ENCODE measurements at regions of chr11 and their contacts with region 1.

Region 1: GRCh38 chr11:66480117-66480938 is at the start of gene DPP3:
- DNase-seq: peak; percentile 93 to 99
- H3K4me3 ChIP-seq: peak within 1 kb of the TSS; percentile 61
- H3K27ac ChIP-seq: peak within 1 kb of the TSS; percentile 59
- H3K4me1 ChIP-seq: peaks cover 7% of the 10 kb centered on the region
- H3K27me3 ChIP-seq: no peaks in the 10 kb centered on the region
- CTCF ChIP-seq: no peak
- total RNA-seq, gene DPP3: 76.2 and 80.0 TPM in 2 replicates

Region 2: DNA sequence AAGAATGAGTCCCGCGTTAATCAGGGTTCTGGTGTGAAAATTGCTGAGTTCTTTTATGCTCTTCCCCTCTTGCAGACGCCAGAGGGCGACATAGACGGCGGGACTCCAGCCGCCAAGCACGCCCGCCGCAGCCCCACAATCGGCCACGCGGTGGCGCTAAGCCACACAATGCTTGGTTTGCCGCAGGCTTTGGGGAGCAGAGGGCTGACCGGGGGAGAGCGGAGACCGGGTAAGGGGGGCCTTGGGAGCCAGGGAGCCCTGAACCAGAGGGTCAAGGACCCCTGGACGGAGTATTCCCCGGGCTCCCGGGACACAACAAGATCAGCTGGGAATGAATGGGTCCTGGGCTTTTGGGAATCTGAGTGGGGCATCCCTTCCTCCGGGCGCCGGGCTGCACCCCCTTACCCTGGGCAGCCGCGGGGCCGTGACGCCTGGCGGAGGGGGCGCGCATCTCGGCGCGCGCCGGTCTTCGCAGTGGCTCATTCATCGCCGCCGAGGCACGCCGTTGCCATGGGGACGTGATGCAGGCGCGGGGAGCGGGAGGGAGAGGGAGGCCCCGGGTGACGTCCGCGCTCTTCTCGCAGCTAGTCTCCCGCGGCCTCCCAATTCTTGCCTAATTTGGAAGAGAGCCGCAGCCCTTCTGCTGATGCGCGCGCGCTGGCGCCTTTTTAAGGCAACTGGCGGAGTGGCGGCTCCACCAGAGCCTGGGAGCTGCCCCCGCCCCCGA is 71.7 kb before region 1 on chr11:
- CTCF ChIA-PET with region 1: interaction called, 7 read pairs
- POLR2A ChIA-PET with region 1: interaction called, 4 read pairs
- intact Hi-C with region 1: loop called (anchors 1 kb)
- DNase-seq: peak; percentile 58 to 87
- H3K4me3 ChIP-seq: no peak overlapping the region
- H3K27ac ChIP-seq: no peak overlapping the region
- H3K4me1 ChIP-seq: no peaks in the 10 kb centered on the region
- H3K27me3 ChIP-seq: peaks cover 88% of the 10 kb centered on the region
- CTCF ChIP-seq: peak; percentile 100

Region 3: DNA sequence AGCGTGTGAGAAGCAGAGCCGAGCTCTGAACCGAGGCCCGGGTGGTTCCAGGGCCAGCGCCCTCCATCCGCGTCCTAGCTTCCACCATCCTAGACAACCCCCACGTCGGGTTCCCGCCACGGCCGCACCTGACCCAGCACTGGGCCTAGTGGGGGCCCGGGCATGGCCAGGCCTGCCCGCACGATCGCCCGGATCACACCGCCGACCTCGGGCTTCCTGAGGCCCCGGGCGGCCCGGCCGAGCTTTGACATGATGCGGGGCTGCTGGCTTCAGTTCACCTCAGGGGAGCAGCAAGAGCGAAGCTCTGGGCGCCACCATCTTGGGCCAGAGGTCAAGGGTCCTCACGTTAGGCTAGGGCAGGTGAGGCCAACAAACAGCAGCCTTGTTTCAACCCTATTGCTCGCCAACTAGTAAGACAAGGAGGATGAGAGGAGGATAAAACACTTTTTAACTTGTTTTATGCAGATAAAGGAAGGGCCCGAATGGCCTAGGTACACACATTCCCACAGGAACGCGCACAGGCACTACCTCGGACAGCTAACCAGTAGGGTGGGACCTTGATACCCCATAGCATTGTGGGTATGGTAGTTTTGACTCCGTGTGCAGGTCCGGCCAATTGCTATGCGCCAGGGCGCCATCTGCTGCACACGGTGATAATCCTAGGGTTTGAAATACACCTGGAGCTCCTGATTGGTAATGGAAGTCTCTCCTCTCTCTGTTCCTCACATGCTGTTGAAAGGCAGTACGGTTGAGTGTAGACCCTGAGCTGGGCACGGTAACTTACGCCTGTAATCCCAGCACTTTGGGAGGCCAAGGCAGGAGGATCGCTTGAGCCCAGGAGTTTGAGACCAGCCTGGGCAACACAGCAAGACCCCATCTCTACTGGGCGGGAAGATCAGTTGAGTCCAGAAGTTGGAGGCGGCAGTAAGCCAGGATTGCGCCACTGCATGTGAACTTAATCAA is 41.5 kb before region 1 on chr11 and contains the start of gene MRPL11:
- CTCF ChIA-PET with region 1: no interaction called
- POLR2A ChIA-PET with region 1: no interaction called
- intact Hi-C with region 1: loop called (anchors 1 kb)
- DNase-seq: peak; percentile 91
- H3K4me3 ChIP-seq: peak within 1 kb of the TSS; percentile 71
- H3K27ac ChIP-seq: peak within 1 kb of the TSS; percentile 58
- H3K4me1 ChIP-seq: peaks cover 12% of the 10 kb centered on the region
- H3K27me3 ChIP-seq: no peaks in the 10 kb centered on the region
- CTCF ChIP-seq: peak; percentile 78
- total RNA-seq, gene MRPL11: 138 and 140 TPM in 2 replicates

Region 4: DNA sequence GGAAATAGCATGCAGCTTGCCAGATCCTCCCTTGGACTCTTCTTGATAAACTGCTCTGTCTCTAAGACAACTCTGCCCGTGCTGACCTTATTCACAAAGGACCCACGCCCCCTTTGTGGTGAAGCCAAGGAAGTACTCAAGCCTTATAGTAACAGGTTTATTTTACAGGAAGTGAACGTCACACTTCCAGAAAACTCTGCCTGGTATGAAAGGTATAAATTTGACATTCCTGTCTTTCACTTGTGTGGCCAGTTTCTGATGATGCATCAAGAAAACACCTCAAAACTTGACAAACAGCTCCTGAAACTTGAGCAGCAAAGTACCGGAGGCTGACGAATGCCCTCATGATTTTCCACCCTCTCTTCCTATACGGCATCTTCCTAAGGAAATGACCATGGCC is 26.1 kb before region 1 on chr11:
- CTCF ChIA-PET with region 1: no interaction called
- POLR2A ChIA-PET with region 1: interaction called, 5 read pairs
- intact Hi-C with region 1: loop called (anchors 1 kb)
- DNase-seq: peak; percentile 58 to 98
- H3K4me3 ChIP-seq: no peak overlapping the region
- H3K27ac ChIP-seq: peak overlapping the region; percentile 65
- H3K4me1 ChIP-seq: peaks cover 23% of the 10 kb centered on the region
- H3K27me3 ChIP-seq: no peaks in the 10 kb centered on the region
- CTCF ChIP-seq: no peak

Region 5: DNA sequence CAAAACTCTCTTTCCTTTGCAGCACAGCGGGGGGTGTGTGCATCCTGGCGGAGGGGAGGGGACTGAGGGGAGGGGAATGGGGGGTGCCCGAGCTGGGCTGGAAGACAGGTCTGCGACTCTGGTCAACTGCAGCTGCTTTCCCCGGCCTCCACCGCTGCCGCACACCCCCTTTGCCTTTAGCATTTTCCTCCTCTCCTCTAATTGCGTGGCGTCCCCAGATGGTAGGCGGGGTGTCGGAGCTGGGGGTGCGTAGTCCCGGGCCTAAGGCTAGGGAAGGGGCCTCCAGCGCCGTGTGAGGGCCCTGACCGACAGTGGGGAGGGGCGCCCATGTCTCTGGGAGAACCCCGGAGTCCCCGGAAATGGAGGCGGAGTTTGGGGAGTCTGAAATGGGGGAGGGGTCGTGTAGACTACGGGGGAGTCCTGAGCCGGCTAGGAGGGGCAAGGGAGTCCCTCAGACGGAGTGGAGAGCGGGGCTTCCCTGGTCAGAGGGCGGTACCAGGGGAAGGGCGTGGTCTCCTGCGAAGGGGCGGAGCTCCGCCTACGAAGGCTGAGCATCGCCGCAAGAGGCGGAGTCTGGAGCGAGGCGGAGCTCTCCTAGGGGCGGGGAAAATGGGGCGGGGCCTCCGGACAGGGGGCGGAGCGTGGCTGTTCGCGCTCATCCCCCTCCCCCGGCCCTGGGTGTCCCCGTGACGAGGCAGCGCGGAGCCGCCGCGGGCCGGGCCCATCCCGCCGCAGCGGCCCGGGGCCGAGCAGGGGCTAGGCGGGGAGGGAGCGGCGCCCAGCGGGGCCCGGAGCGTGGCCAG is 13.9 kb before region 1 on chr11 and contains the start of gene PELI3:
- CTCF ChIA-PET with region 1: no interaction called
- POLR2A ChIA-PET with region 1: interaction called, 17 read pairs
- intact Hi-C with region 1: no loop called
- DNase-seq: peak; percentile 77 to 95
- H3K4me3 ChIP-seq: peak within 1 kb of the TSS; percentile 90
- H3K27ac ChIP-seq: no peak within 1 kb of the TSS
- H3K4me1 ChIP-seq: peaks cover 10% of the 10 kb centered on the region
- H3K27me3 ChIP-seq: no peaks in the 10 kb centered on the region
- CTCF ChIP-seq: no peak
- total RNA-seq, gene PELI3: 14.0 and 18.0 TPM in 2 replicates

Region 6: DNA sequence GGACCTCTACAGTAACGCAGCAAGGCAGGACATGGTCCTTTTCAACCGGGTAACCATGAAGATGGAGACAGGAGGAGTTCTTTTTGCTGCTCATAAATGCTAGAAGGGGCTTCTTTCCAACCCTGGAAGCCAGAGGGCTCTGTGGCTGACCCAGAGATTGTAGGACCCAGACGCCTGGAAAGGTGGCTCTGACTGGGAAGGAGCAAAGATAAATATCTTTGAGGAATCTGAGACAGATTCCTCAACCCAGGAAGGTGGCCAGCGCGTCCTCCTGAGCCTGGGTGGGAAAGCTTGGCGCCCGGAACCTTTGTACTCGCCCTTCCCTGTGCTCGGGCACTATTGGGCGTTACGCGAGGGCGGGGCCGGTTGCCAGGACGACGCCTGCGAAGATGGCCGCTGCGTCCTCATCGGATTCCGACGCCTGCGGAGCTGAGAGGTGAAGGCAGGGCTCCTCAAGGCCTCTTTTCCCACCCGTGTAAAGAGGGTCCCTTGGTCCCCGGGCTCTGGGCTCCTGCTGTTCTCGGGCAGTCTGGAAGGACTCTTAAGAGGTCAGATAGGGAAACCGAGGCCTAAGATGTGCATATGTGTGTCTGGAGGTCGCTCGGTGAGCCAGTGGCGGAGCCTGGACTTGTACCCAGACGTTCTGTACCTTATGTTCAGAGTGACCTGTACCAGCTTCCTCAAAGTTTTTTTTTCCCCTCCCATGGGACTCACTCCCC is 30.1 kb after region 1 on chr11 and contains the start of gene BBS1:
- CTCF ChIA-PET with region 1: no interaction called
- POLR2A ChIA-PET with region 1: interaction called, 3 read pairs
- intact Hi-C with region 1: loop called (anchors 1 kb)
- DNase-seq: peak; percentile 71 to 79
- H3K4me3 ChIP-seq: peak within 1 kb of the TSS; percentile 93
- H3K27ac ChIP-seq: no peak within 1 kb of the TSS
- H3K4me1 ChIP-seq: peaks cover 11% of the 10 kb centered on the region
- H3K27me3 ChIP-seq: no peaks in the 10 kb centered on the region
- CTCF ChIP-seq: no peak
- total RNA-seq, gene BBS1: 56.1 and 63.4 TPM in 2 replicates

Region 7: DNA sequence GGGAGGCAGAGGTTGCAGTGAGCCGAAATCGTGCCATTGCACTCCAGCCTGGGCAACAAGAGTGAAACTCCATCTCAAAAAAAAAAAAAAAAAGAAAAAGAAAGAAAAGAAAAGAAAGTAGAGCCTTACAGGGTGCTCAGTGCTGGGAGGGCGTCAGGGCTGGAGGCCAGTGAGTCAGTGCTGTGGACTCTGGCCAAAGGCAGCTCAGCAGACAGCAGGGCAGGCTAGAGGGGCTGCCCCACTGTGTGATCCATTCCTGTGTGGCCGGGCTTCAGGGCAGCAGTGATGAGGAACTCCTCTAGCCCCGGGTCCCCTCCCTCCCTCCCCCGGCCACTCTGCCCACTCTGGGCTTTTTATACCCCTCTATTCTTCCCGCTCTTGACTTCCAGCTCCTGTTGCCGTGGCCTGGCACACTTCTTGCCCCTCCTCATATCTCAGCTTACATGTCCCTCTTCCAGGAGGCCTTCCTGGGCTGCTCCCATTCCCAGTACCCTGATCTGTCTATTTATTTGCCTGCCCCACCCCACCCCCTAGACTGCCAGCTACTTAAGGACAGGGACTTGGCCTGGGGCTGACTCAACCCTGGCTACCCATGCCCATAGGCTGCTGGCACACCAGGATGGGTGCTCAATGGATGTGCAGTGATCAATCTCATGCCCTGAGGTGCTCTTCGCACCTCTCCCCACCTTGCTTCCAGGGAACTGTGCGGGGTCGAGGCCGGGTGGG is 552.7 kb after region 1 on chr11:
- CTCF ChIA-PET with region 1: no interaction called
- POLR2A ChIA-PET with region 1: no interaction called
- intact Hi-C with region 1: loop called (anchors 5 kb)
- DNase-seq: peak; percentile 71 to 79
- H3K4me3 ChIP-seq: peak overlapping the region; percentile 22; the same call in 1 of the 2 replicates
- H3K27ac ChIP-seq: peak overlapping the region; percentile 77
- H3K4me1 ChIP-seq: peaks cover 52% of the 10 kb centered on the region
- H3K27me3 ChIP-seq: no peaks in the 10 kb centered on the region
- CTCF ChIP-seq: no peak

Measured in PC-9 (cell line).